GM12878 (cell line): ENCODE measurements at regions of chr1 and their contacts with region 1.

Region 1: DNA sequence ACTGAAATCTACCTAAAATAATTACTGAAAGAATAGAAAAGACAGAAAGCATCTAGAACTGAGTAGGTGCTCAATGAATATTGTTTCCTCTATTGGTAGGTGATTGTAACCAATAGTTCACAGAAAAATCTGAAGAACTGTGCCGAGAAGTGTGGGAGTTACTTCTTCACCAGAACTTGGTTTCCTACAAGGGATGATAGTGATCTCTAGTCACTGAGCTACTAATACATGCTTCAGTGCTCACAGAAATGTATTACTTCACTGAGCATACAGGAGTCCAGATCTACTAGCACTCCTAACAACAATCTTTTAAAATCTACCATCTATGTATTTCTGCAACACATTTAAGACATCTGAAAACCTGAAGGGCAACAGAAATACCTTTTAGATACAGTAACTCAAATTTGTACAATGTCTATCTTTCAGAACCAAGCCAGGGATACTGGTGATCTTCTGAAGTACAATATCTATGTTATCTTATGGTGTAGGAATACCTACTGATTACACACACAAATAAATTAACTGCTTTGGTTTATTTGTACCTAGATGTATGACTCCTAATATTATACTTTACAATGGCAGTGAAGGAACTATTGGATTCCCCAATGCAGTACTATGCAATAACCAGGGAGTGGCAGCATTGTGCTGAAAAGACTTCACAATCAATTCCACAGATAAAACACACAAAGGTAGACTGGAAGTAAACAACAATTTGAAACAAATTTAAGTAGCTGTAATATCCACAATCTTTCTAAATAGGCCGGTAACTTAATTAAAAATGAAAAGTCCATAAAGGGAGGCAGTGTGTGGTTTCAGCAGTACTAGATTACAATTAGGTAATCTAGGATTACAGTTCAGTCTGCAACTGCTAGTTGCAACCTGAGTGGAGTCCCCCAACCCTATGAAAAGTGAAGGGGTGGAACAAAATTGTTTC is 243.0 kb downstream of the SLC45A1 start:
- DNase-seq: no peak
- ATAC-seq: peak; percentile 78
- H3K4me3 ChIP-seq: no peak overlapping the region
- H3K27ac ChIP-seq: no peak overlapping the region; the same call in 1 of the 2 replicates
- H3K4me1 ChIP-seq: peaks cover 15% of the 10 kb centered on the region
- H3K27me3 ChIP-seq: no peaks in the 10 kb centered on the region
- CTCF ChIP-seq: peak; percentile 83 to 88 (median 87)
- EP300 ChIP-seq: no peak
- POLR2A ChIP-seq: no peak
- RAD21 ChIP-seq: peak; percentile 96

Region 2: DNA sequence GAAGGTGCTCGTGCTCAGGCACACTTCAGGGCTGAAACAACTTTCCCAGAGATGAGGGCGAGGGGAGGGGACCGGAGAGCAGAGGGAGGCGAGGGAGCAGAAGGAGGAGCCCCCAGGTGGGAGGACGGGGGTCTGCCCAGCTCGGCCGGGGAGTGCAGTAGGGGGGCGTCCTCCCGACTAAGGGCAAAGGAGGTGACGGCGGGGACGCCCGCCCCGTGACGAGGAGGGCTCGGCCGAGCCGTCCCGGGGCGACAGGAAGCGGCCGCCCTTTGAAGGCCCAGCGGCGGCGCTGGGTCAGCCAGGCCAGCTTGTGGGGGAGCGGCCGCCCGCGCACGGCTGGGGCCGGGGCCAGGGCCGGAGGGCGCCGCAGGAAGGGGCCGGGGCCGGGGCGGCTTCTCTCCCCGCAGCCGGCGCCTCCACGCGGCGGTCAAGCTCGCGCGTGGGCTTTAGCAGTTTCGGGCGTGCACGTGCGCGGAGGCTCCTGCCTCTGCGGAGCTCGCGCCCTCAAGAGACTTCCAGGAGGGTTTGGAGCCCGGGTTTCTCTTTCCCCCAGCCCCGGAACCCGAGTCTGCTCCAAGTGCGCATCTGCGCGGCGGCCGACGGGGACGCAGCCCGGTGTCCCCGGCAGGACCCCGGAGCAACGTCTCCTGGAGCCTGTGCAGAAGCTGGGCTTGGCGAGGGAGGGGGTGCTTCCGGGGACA is 343.7 kb before region 1 on chr1:
- CTCF ChIA-PET with region 1: no interaction called
- POLR2A ChIA-PET with region 1: no interaction called
- RAD21 ChIA-PET with region 1: no interaction called
- SMC1A ChIA-PET with region 1: no interaction called
- in situ Hi-C with region 1: no loop called
- intact Hi-C with region 1: no loop called
- DNase-seq: no peak
- ATAC-seq: peak; percentile 74
- H3K4me3 ChIP-seq: no peak overlapping the region
- H3K27ac ChIP-seq: no peak overlapping the region
- H3K4me1 ChIP-seq: no peaks in the 10 kb centered on the region
- H3K27me3 ChIP-seq: peaks cover 0 to 3% of the 10 kb centered on the region in 2 experiments; a peak in 2 of 4 replicates
- CTCF ChIP-seq: no peak
- EP300 ChIP-seq: no peak
- POLR2A ChIP-seq: no peak
- RAD21 ChIP-seq: no peak

Region 3: DNA sequence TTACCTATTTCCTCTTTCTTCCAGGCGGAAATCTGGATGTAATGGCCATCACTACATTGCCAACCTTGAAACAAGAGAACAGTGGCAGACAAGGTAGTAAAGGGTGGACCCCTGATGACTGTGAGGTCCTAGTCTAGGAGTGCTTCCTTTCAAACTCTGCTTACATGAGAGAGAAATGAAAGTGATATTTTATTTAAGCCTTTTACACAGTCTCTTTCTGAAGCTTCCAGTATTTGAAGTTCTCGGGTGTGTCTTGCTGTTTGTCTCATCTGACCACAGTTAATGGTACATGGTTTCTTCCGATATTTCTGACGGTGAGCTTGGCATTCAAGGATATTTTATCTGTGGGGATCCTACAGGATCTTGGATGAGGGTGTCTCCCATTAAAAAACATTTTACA is 27.8 kb before region 1 on chr1:
- CTCF ChIA-PET with region 1: interaction called, 3 read pairs
- POLR2A ChIA-PET with region 1: interaction called, 3 read pairs
- RAD21 ChIA-PET with region 1: interaction called, 10 read pairs
- SMC1A ChIA-PET with region 1: interaction called, 7 read pairs
- in situ Hi-C with region 1: no loop called
- intact Hi-C with region 1: no loop called
- DNase-seq: no peak
- ATAC-seq: peak; percentile 94
- H3K4me3 ChIP-seq: peak overlapping the region; percentile 50
- H3K27ac ChIP-seq: peak overlapping the region; percentile 79
- H3K4me1 ChIP-seq: peaks cover 34% of the 10 kb centered on the region
- H3K27me3 ChIP-seq: no peaks in the 10 kb centered on the region
- CTCF ChIP-seq: no peak
- EP300 ChIP-seq: no peak
- POLR2A ChIP-seq: no peak
- RAD21 ChIP-seq: no peak

Region 4: DNA sequence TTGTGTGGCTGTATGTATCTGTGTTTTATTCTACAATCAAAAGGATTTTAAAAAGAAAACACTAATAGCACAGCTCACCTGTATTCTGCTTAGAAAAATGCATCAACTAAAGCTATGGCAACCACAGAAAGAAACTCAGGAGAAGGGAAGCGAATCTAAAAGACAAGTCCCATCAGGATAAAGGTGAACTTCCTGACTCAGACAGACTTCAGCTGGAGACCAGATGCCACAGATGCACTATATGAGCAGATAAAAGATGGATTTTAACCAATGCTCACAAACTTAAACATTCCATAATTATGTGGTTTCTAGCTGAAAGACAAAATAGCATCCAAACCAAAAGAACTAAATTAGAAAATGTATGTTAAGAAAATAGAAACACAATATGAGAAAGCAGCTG is 25.6 kb after region 1 on chr1:
- CTCF ChIA-PET with region 1: interaction called, 18 read pairs
- POLR2A ChIA-PET with region 1: no interaction called
- RAD21 ChIA-PET with region 1: interaction called, 12 read pairs
- SMC1A ChIA-PET with region 1: interaction called, 7 read pairs
- in situ Hi-C with region 1: no loop called
- intact Hi-C with region 1: no loop called
- DNase-seq: no peak
- ATAC-seq: no peak
- H3K4me3 ChIP-seq: no peak overlapping the region
- H3K27ac ChIP-seq: no peak overlapping the region
- H3K4me1 ChIP-seq: peaks cover 4% of the 10 kb centered on the region; the same call in 1 of the 2 replicates
- H3K27me3 ChIP-seq: no peaks in the 10 kb centered on the region
- CTCF ChIP-seq: no peak
- EP300 ChIP-seq: no peak
- POLR2A ChIP-seq: no peak
- RAD21 ChIP-seq: no peak

Region 5: GRCh38 chr1:8649027-8649426 is 88.1 kb after region 1 on chr1:
- CTCF ChIA-PET with region 1: interaction called, 12 read pairs
- POLR2A ChIA-PET with region 1: interaction called, 3 read pairs
- RAD21 ChIA-PET with region 1: interaction called, 14 read pairs
- SMC1A ChIA-PET with region 1: interaction called, 25 read pairs
- in situ Hi-C with region 1: no loop called
- intact Hi-C with region 1: no loop called
- DNase-seq: no peak
- ATAC-seq: peak; percentile 76
- H3K4me3 ChIP-seq: no peak overlapping the region
- H3K27ac ChIP-seq: 0 out of 2 replicates have a peak overlapping the region, but pooled peaks have one; percentile 39
- H3K4me1 ChIP-seq: peaks cover 67% of the 10 kb centered on the region
- H3K27me3 ChIP-seq: no peaks in the 10 kb centered on the region
- CTCF ChIP-seq: no peak
- EP300 ChIP-seq: peak in 1 of 2 experiments; percentile 84; a peak in 3 of 4 replicates
- POLR2A ChIP-seq: no peak
- RAD21 ChIP-seq: no peak

Region 6: GRCh38 chr1:8679395-8679800 is 118.5 kb after region 1 on chr1:
- CTCF ChIA-PET with region 1: interaction called, 181 read pairs
- POLR2A ChIA-PET with region 1: interaction called, 3 read pairs
- RAD21 ChIA-PET with region 1: interaction called, 174 read pairs
- SMC1A ChIA-PET with region 1: interaction called, 258 read pairs
- in situ Hi-C with region 1: loop called (anchors 5 kb)
- intact Hi-C with region 1: no loop called
- DNase-seq: no peak
- ATAC-seq: peak; percentile 49
- H3K4me3 ChIP-seq: no peak overlapping the region
- H3K27ac ChIP-seq: 0 out of 2 replicates have a peak overlapping the region, but pooled peaks have one; percentile 2
- H3K4me1 ChIP-seq: peaks cover 13% of the 10 kb centered on the region
- H3K27me3 ChIP-seq: no peaks in the 10 kb centered on the region
- CTCF ChIP-seq: no peak
- EP300 ChIP-seq: no peak
- POLR2A ChIP-seq: no peak
- RAD21 ChIP-seq: no peak

Region 7: GRCh38 chr1:8712413-8713231 is 151.7 kb after region 1 on chr1:
- CTCF ChIA-PET with region 1: interaction called, 21 read pairs
- POLR2A ChIA-PET with region 1: interaction called, 4 read pairs
- RAD21 ChIA-PET with region 1: interaction called, 8 read pairs
- SMC1A ChIA-PET with region 1: interaction called, 19 read pairs
- in situ Hi-C with region 1: no loop called
- intact Hi-C with region 1: no loop called
- DNase-seq: no peak
- ATAC-seq: peak; percentile 83
- H3K4me3 ChIP-seq: peak overlapping the region; percentile 10; the same call in 1 of the 2 replicates
- H3K27ac ChIP-seq: peak overlapping the region; percentile 49
- H3K4me1 ChIP-seq: peaks cover 8% of the 10 kb centered on the region
- H3K27me3 ChIP-seq: no peaks in the 10 kb centered on the region
- CTCF ChIP-seq: no peak
- EP300 ChIP-seq: peak in 1 of 2 experiments; percentile 55; a peak in 1 of 4 replicates
- POLR2A ChIP-seq: no peak
- RAD21 ChIP-seq: no peak

Region 8: GRCh38 chr1:8848663-8849386 is 287.9 kb after region 1 on chr1:
- CTCF ChIA-PET with region 1: interaction called, 59 read pairs
- POLR2A ChIA-PET with region 1: interaction called, 5 read pairs
- RAD21 ChIA-PET with region 1: interaction called, 64 read pairs
- SMC1A ChIA-PET with region 1: interaction called, 54 read pairs
- in situ Hi-C with region 1: loop called (anchors 5 kb)
- intact Hi-C with region 1: loop called (anchors 1 kb)
- DNase-seq: no peak
- ATAC-seq: peak; percentile 98
- H3K4me3 ChIP-seq: no peak overlapping the region
- H3K27ac ChIP-seq: no peak overlapping the region
- H3K4me1 ChIP-seq: peaks cover 2% of the 10 kb centered on the region; the same call in 1 of the 2 replicates
- H3K27me3 ChIP-seq: no peaks in the 10 kb centered on the region
- CTCF ChIP-seq: peak; percentile 82 to 95 (median 87)
- EP300 ChIP-seq: no peak
- POLR2A ChIP-seq: no peak
- RAD21 ChIP-seq: peak; percentile 87